Activated CD8-positive, alpha-beta T cell treated with anti-CD3 and anti-CD28 coated beads for 36 hours (primary cell): ENCODE measurements at regions of chr17 and their contacts with region 1.

Region 1: GRCh38 chr17:49753959-49754391 is 10.0 kb downstream of the FAM117A start:
- DNase-seq: no peak
- ATAC-seq: no peak
- H3K4me3 Mint-ChIP-seq: no peak overlapping the region
- H3K27ac Mint-ChIP-seq: peak overlapping the region; percentile 78
- H3K4me1 Mint-ChIP-seq: peaks cover 71% of the 10 kb centered on the region
- H3K27me3 Mint-ChIP-seq: no peaks in the 10 kb centered on the region
- CTCF ChIP-seq: no peak

Region 2: DNA sequence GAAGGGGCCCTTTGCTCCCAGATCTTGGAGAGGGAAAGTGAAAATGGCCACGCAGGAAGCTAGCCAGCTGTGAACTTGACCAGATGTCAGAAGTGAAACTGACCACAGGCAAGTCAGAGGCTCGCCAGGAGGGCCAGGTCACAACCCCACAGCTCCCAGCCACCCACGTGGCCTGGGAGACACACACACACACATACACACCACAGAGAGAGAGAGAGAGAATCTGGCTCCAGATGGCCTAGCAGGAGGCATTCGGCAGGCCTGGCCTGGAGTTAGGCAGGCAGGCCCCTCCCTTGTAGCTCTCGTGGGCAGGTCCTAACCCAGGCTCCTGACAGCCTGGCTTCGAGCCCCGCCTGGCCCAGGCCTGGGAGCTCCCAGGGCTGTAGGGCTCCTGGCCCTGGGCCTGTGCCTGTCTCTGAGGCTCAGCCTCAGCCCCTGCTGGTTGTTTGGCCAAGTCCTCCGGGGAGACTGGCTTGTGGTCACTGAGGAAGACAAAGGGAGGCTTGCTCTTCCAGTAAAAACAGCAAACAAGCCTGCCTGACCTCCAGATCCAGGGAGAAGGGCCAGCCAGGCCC is 238.7 kb before region 1 on chr17:
- CTCF ChIA-PET with region 1: no interaction called
- POLR2A ChIA-PET with region 1: no interaction called
- intact Hi-C with region 1: no loop called
- DNase-seq: no peak
- ATAC-seq: peak; percentile 24
- H3K4me3 Mint-ChIP-seq: no peak overlapping the region
- H3K27ac Mint-ChIP-seq: no peak overlapping the region
- H3K4me1 Mint-ChIP-seq: no peaks in the 10 kb centered on the region
- H3K27me3 Mint-ChIP-seq: no peaks in the 10 kb centered on the region
- CTCF ChIP-seq: no peak

Region 3: DNA sequence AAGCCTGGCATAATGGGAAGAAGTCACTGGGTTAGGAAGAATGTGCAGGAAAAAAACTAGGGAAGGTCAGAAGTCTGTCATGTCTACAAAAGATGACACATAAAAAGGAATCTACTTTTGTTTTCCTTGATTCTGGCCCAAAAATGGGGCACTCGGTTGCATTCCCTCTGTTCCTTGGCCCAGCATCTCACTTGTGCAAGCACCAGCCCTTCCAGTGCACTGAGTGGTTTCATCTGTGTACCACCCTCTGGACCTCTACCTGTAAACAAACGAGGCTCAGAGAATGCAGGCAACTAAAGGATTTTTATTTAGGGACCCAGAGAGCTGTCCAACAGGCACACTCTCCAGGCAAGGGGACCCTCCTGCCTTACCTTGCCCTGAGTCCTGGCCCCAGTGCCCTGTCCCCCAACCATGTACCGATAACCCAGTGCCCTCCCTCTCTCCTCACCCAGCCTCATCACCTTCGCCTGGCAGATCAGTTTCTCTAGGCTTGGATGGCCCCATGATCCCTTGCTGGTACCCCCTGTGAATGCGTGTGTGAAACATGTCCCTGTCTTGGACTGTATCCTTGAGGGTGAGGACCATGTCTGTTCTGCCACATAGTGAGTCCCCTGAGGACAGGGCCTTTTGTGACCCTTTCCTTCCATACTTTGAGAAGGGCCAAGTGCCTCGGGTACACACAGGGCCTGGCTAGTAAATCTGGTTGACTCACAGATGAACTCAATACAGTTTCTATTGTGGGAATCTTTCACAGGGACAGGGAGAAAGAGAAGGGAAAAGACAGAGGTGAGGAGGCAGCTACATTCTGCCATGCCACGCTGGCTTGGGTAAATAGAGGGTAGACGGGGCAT is 165.0 kb before region 1 on chr17:
- CTCF ChIA-PET with region 1: no interaction called
- POLR2A ChIA-PET with region 1: no interaction called
- intact Hi-C with region 1: no loop called
- DNase-seq: no peak
- ATAC-seq: no peak
- H3K4me3 Mint-ChIP-seq: no peak overlapping the region
- H3K27ac Mint-ChIP-seq: no peak overlapping the region
- H3K4me1 Mint-ChIP-seq: no peaks in the 10 kb centered on the region
- H3K27me3 Mint-ChIP-seq: no peaks in the 10 kb centered on the region
- CTCF ChIP-seq: no peak

Region 4: GRCh38 chr17:49677933-49678847 is 75.8 kb before region 1 on chr17 and contains the start of gene SPOP:
- CTCF ChIA-PET with region 1: no interaction called
- POLR2A ChIA-PET with region 1: no interaction called
- intact Hi-C with region 1: no loop called
- DNase-seq: peak; percentile 99
- ATAC-seq: peak; percentile 97
- H3K4me3 Mint-ChIP-seq: peak within 1 kb of the TSS; percentile 94
- H3K27ac Mint-ChIP-seq: peak within 1 kb of the TSS; percentile 98
- H3K4me1 Mint-ChIP-seq: peaks cover 31% of the 10 kb centered on the region
- H3K27me3 Mint-ChIP-seq: no peaks in the 10 kb centered on the region
- CTCF ChIP-seq: no peak
- total RNA-seq, gene SPOP: 61.6 to 63.5 TPM

Region 5: GRCh38 chr17:49739641-49740271 is 14.2 kb before region 1 on chr17:
- CTCF ChIA-PET with region 1: interaction called, 7 read pairs
- POLR2A ChIA-PET with region 1: interaction called, 17 read pairs
- intact Hi-C with region 1: no loop called
- DNase-seq: peak; percentile 95
- ATAC-seq: peak; percentile 93
- H3K4me3 Mint-ChIP-seq: peak overlapping the region; percentile 79
- H3K27ac Mint-ChIP-seq: peak overlapping the region; percentile 100
- H3K4me1 Mint-ChIP-seq: peaks cover 79% of the 10 kb centered on the region
- H3K27me3 Mint-ChIP-seq: no peaks in the 10 kb centered on the region
- CTCF ChIP-seq: no peak

Region 6: GRCh38 chr17:49775543-49776260 is 21.7 kb after region 1 on chr17:
- CTCF ChIA-PET with region 1: no interaction called
- POLR2A ChIA-PET with region 1: no interaction called
- intact Hi-C with region 1: no loop called
- DNase-seq: no peak
- ATAC-seq: no peak
- H3K4me3 Mint-ChIP-seq: no peak overlapping the region
- H3K27ac Mint-ChIP-seq: no peak overlapping the region
- H3K4me1 Mint-ChIP-seq: peaks cover 6% of the 10 kb centered on the region
- H3K27me3 Mint-ChIP-seq: no peaks in the 10 kb centered on the region
- CTCF ChIP-seq: no peak